ENCODE measurements at regions of chr11 and their contacts with region 1.

Region 1: GRCh38 chr11:33257897-33258630 is 883 bp downstream of the HIPK3 start:
- DNase-seq: peak; percentile 97

Region 2: DNA sequence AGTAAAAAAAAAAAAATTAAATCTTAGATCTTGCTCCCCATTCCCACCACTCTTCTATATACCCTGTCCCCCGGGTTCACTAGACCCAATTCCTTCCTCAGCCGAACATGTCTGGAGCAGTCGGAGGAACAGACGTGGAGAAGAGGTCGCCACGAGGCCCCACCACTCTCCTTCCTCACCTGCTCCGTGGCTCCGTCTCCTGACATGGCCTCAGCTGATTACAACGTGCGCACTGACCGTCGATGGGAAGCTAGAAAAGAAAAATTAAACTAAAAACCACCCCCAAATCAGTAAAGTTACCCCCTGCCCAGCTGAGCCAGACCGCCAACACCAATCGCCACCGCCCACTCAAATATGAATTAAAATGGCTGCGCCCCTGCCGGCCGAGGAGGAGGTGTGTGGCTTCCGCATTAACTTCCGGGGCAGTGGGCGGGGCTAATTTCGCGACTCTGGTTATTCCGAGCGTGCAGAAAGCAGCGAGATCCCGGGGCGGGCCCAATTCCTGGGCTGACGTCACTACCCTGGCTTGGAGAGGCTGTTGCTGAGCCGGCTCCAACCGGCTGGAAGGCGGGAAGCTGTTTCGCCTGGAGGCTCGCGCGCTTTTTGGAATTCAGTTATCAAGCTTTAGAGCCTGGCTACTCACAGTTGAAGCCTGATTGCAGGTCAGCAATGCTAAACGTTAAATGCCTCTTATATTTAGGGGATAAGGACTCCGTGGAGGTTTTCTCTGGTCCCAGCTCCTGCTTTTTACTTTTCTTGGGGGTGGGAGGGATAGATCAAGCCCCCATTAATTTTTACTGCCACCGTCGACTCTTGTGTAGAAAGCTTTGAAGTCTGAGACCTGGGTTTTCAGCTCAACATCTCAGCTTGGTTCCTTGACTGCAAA is 96.7 kb before region 1 on chr11 and contains the start of gene CSTF3:
- intact Hi-C with region 1: loop called (anchors 10 kb)
- DNase-seq: peak; percentile 100
- total RNA-seq, gene CSTF3: 15.9 to 17.5 TPM